H1 (cell line): ENCODE measurements at regions of chr2 and their contacts with region 1.

Region 1: GRCh38 chr2:74515981-74516633 is 1.9 kb downstream of the TLX2 start:
- DNase-seq: peak in 1 of 2 experiments; percentile 95
- H3K4me3 ChIP-seq: peak overlapping the region in 1 of 4 experiments; percentile 62; a peak in 3 of 8 replicates
- H3K27ac ChIP-seq: no peak overlapping the region
- H3K4me1 ChIP-seq: peaks cover 0 to 24% (median 10%) of the 10 kb centered on the region in 4 experiments; a peak in 6 of 7 replicates
- H3K27me3 ChIP-seq: peaks cover 68 to 93% (median 89%) of the 10 kb centered on the region in 4 experiments
- CTCF ChIP-seq: no peak
- EP300 ChIP-seq: no peak
- POLR2A ChIP-seq: no peak
- RAD21 ChIP-seq: no peak

Region 2: GRCh38 chr2:74498500-74499266 is 17.4 kb before region 1 on chr2:
- CTCF ChIA-PET with region 1: interaction called, 20 read pairs
- POLR2A ChIA-PET with region 1: interaction called, 63 read pairs
- DNase-seq: peak in 1 of 2 experiments; percentile 83
- H3K4me3 ChIP-seq: peak overlapping the region; percentile 20 to 57 (median 46); a peak in 7 of 8 replicates
- H3K27ac ChIP-seq: no peak overlapping the region
- H3K4me1 ChIP-seq: peaks cover 7 to 53% (median 31%) of the 10 kb centered on the region in 4 experiments
- H3K27me3 ChIP-seq: peaks cover 75 to 88% (median 87%) of the 10 kb centered on the region in 4 experiments
- CTCF ChIP-seq: no peak
- EP300 ChIP-seq: no peak
- POLR2A ChIP-seq: no peak
- RAD21 ChIP-seq: no peak

Region 3: DNA sequence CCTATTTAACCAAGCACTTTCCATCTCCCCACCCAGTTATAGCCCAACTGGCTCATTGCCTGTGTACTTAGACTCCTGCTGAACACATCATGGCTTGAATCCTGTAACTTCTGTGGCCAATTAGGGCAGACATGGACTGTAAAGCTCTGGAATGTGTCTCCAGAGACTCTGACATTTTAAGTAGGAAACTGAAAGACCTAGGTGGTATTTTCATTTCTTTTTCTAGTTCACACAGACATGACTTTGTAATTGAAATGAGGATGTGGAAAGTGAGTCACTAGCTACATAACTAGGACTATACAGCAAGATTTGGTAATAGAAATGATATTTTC is 50.6 kb after region 1 on chr2:
- CTCF ChIA-PET with region 1: no interaction called
- POLR2A ChIA-PET with region 1: no interaction called
- DNase-seq: no peak
- H3K4me3 ChIP-seq: no peak overlapping the region
- H3K27ac ChIP-seq: no peak overlapping the region
- H3K4me1 ChIP-seq: no peaks in the 10 kb centered on the region
- H3K27me3 ChIP-seq: peaks cover 0 to 2% (median 0%) of the 10 kb centered on the region in 4 experiments; a peak in 1 of 7 replicates
- CTCF ChIP-seq: no peak
- EP300 ChIP-seq: no peak
- POLR2A ChIP-seq: no peak
- RAD21 ChIP-seq: no peak

Region 4: DNA sequence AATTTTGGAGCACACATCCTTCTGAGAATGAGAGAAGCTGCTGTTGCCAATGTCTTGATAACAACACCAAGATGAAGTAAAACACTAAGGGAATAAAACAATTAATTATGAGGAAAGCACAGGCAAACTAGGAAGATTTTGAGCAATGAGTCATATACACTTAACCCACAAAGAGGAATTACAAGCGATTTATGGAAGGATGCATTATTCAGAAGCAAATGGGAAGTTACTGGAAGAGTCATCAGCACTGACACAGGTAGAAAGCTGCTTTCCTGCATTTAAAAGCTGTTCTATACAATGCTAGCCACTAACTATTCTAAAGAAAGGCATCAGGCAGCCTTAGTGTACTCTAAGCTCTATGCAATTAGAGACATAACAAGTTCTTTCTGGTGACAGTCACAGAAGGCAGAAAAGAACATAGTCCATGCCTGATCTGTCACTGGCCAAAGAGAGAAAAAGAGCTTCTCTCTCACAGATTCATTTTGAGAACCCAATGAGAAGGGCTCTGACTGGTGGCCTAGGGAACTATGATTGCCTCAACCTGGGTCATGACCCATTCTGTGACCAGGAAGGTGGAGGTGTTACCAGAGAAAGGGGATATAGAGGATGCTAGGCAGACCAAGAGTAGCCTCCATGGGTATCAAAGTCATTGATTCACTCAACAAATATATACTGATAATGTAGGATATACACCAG is 86.6 kb after region 1 on chr2:
- CTCF ChIA-PET with region 1: no interaction called
- POLR2A ChIA-PET with region 1: no interaction called
- DNase-seq: no peak
- H3K4me3 ChIP-seq: no peak overlapping the region
- H3K27ac ChIP-seq: no peak overlapping the region
- H3K4me1 ChIP-seq: no peaks in the 10 kb centered on the region
- H3K27me3 ChIP-seq: peaks cover 0 to 2% (median 0%) of the 10 kb centered on the region in 4 experiments; a peak in 1 of 7 replicates
- CTCF ChIP-seq: no peak
- EP300 ChIP-seq: no peak
- POLR2A ChIP-seq: no peak
- RAD21 ChIP-seq: no peak

Region 5: GRCh38 chr2:74668087-74668486 is 152.0 kb after region 1 on chr2:
- CTCF ChIA-PET with region 1: no interaction called
- POLR2A ChIA-PET with region 1: no interaction called
- DNase-seq: no peak
- H3K4me3 ChIP-seq: no peak overlapping the region
- H3K27ac ChIP-seq: no peak overlapping the region
- H3K4me1 ChIP-seq: no peaks in the 10 kb centered on the region
- H3K27me3 ChIP-seq: no peaks in the 10 kb centered on the region
- CTCF ChIP-seq: no peak
- EP300 ChIP-seq: no peak
- POLR2A ChIP-seq: no peak
- RAD21 ChIP-seq: no peak